Naive thymus-derived CD4-positive, alpha-beta T cell (primary cell): ENCODE measurements at regions of chr5 and their contacts with region 1.

Region 1: DNA sequence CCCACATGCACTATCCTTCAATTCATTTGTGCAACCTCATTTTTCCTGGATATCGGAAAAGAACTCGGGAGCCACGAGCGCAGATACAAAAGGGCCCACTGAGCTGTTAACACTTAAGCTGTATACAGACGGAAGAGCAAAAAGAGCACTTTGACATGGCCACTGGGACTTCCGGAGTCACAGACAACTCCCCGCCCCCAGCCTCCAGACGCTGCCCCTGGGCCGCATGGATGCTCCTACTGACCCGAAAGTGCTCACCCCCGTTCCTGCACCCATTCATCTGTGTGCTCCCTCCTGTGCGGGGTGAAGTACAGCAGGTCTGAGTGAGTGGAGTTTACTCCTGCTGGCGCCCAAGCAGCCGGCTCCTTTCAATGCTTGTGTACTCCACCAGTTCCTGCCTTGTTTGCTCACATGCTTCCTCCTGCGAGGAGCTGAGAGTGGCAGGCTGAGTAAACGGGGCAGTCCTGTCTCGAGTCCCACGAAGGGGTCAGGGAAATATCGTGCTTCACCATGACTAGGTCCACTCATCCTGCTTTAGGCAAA is 901.0 kb upstream of the CTNND2 start:
- DNase-seq: no peak
- ATAC-seq: no peak
- H3K4me3 ChIP-seq: no peak overlapping the region
- H3K4me3 Mint-ChIP-seq: no peak overlapping the region
- H3K27ac ChIP-seq: no peak overlapping the region
- H3K27ac Mint-ChIP-seq: no peak overlapping the region
- H3K4me1 ChIP-seq: no peaks in the 10 kb centered on the region
- H3K4me1 Mint-ChIP-seq: no peaks in the 10 kb centered on the region
- H3K27me3 ChIP-seq: no peaks in the 10 kb centered on the region
- H3K27me3 Mint-ChIP-seq: no peaks in the 10 kb centered on the region

Region 2: DNA sequence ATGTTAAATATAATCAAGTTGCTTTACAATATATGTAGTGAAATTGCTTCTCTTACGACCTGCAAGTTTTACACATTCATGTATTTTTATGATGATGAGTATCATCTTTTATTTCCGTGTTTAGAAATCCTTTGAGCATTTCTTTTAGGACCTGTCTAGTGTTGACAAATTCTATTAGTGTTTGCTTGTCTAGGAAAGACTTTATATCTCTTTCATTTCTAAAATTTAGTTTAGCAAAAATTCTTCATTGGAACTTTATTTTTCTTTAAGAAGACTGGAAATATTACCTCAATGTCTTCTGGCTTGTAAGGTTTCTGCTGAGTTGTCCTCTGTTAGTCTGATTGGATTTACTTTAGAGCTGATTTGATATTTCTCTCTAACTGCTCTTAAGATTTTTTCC is 19.9 kb after region 1 on chr5:
- CTCF ChIA-PET with region 1: no interaction called
- POLR2A ChIA-PET with region 1: no interaction called
- intact Hi-C with region 1: loop called in 1 of 2 experiments (anchors 1 kb)
- DNase-seq: no peak
- ATAC-seq: no peak
- H3K4me3 ChIP-seq: no peak overlapping the region
- H3K4me3 Mint-ChIP-seq: no peak overlapping the region
- H3K27ac ChIP-seq: no peak overlapping the region
- H3K27ac Mint-ChIP-seq: no peak overlapping the region
- H3K4me1 ChIP-seq: no peaks in the 10 kb centered on the region
- H3K4me1 Mint-ChIP-seq: no peaks in the 10 kb centered on the region
- H3K27me3 ChIP-seq: no peaks in the 10 kb centered on the region
- H3K27me3 Mint-ChIP-seq: no peaks in the 10 kb centered on the region

Region 3: DNA sequence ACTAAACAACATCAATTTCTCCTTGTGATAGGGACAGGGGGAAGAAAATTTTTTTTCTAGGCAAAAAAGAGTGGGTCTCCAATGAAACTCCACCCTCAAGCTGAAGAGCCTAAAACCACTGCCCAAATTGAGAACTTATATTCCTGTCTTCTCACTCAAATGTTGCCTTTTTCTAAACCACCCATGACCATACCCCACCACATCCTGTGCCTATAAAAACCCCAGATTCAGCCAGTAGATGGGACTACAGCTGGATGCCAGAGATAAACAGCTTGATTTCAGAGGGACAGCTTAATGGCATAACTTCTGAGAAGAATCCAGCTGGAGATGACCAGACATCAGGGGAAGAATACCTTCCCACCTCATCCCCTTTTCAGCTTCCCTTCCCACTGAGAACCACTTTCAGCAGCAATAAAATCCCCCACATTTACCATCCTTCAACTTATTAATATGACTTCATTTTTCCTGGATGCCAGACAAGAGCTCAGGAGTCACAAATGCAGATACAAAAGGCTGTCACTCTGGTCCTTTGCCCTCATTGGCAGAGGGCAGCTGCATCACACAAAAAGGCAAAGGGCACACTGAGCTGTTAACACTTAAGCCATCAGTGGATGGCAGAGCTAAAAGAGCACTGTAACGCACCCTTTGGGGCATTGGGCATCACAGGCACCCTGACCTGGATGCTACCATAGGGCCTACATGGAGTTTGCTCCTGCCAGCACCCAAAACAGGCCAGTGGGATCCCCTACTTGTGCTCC is 71.5 kb after region 1 on chr5:
- CTCF ChIA-PET with region 1: no interaction called
- POLR2A ChIA-PET with region 1: no interaction called
- intact Hi-C with region 1: no loop called
- DNase-seq: no peak
- ATAC-seq: no peak
- H3K4me3 ChIP-seq: no peak overlapping the region
- H3K4me3 Mint-ChIP-seq: no peak overlapping the region
- H3K27ac ChIP-seq: no peak overlapping the region
- H3K27ac Mint-ChIP-seq: no peak overlapping the region
- H3K4me1 ChIP-seq: no peaks in the 10 kb centered on the region
- H3K4me1 Mint-ChIP-seq: peaks cover 0 to 6% (median 0%) of the 10 kb centered on the region in 7 donors
- H3K27me3 ChIP-seq: no peaks in the 10 kb centered on the region
- H3K27me3 Mint-ChIP-seq: no peaks in the 10 kb centered on the region